Dendritic cell treated with granulocyte-macrophage colony-stimulating factor and Interleukin-4, amounts not matched to agents 40 ng/mL and 50 ng/mL, for 4 days (primary cell): ENCODE measurements at regions of chr17 and their contacts with region 1.

Region 1: GRCh38 chr17:58447039-58447975 is 30.0 kb upstream of the RNF43 start:
- H3K4me3 Mint-ChIP-seq: no peak overlapping the region
- H3K27ac Mint-ChIP-seq: no peak overlapping the region
- H3K4me1 Mint-ChIP-seq: no peaks in the 10 kb centered on the region
- H3K27me3 Mint-ChIP-seq: peaks cover 27% of the 10 kb centered on the region

Region 2: DNA sequence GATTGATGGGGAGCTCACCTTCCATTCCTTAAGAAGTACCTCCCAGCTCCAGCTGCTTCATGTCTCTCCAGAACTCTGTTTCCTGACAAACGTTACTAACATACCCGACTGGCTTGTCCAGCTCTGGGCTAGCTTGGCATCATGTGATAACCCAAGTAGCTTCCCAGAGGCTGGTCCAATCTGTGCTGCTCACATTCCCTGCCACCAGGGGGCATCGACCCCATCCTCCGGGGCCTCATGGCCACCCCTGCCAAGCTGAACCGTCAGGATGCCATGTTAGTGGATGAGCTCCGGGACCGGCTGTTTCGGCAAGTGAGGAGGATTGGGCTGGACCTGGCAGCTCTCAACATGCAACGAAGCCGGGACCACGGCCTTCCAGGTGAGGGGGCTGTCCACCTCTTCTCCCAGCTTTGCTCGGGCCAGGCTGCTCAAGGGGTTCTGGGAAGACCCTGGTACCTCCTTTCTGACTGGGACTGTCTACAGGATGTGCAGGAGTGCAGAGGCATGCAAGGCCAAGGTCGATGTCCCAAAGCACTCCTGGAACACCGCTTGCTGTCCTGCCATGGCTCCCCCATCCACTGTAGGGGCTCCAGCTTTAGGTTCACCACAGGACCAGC is 247.2 kb before region 1 on chr17:
- intact Hi-C with region 1: loop called (anchors 1 kb)
- H3K4me3 Mint-ChIP-seq: no peak overlapping the region
- H3K27ac Mint-ChIP-seq: no peak overlapping the region
- H3K4me1 Mint-ChIP-seq: no peaks in the 10 kb centered on the region
- H3K27me3 Mint-ChIP-seq: peaks cover 38% of the 10 kb centered on the region

Region 3: GRCh38 chr17:58317421-58318064 is 129.8 kb before region 1 on chr17:
- intact Hi-C with region 1: loop called (anchors 1 kb)
- H3K4me3 Mint-ChIP-seq: no peak overlapping the region
- H3K27ac Mint-ChIP-seq: no peak overlapping the region
- H3K4me1 Mint-ChIP-seq: peaks cover 19% of the 10 kb centered on the region
- H3K27me3 Mint-ChIP-seq: peaks cover 61% of the 10 kb centered on the region

Region 4: DNA sequence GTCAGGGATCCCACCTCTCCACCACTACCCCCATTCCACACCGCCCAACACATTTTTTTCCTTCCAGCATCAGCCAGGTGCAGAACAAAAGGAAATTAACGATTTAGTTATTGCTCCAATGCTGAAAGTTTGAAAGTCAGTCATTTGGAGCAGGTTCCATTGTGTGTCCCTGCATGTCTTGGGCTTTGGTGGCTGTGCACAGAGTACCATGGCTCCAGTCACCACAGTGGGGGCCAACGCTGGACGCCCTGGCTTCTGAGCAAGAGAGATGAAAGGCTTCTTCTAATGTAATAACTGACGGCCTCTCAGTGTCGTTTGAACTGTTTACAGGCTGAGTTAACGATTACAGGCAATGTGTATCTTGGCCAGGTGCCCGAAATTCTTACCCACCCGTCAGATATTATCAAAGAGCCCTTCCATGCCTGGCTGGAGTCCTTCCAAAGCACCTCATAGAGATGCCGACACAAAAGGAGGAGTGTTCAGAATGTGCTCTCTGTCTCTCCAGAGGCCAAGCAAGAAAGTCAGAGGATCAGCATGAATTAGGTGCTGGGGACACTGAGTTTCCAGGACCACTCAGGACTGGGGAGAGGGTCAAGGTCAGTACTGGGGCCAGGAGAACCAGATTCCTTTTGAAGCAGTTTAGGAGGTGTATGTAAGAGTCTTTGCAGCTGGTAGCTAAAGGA is 55.9 kb before region 1 on chr17:
- intact Hi-C with region 1: no loop called
- H3K4me3 Mint-ChIP-seq: no peak overlapping the region
- H3K27ac Mint-ChIP-seq: no peak overlapping the region
- H3K4me1 Mint-ChIP-seq: peaks cover 6% of the 10 kb centered on the region
- H3K27me3 Mint-ChIP-seq: peaks cover 32% of the 10 kb centered on the region